K562 (cell line): ENCODE measurements at regions of chr12 and their contacts with region 1.

Region 1: DNA sequence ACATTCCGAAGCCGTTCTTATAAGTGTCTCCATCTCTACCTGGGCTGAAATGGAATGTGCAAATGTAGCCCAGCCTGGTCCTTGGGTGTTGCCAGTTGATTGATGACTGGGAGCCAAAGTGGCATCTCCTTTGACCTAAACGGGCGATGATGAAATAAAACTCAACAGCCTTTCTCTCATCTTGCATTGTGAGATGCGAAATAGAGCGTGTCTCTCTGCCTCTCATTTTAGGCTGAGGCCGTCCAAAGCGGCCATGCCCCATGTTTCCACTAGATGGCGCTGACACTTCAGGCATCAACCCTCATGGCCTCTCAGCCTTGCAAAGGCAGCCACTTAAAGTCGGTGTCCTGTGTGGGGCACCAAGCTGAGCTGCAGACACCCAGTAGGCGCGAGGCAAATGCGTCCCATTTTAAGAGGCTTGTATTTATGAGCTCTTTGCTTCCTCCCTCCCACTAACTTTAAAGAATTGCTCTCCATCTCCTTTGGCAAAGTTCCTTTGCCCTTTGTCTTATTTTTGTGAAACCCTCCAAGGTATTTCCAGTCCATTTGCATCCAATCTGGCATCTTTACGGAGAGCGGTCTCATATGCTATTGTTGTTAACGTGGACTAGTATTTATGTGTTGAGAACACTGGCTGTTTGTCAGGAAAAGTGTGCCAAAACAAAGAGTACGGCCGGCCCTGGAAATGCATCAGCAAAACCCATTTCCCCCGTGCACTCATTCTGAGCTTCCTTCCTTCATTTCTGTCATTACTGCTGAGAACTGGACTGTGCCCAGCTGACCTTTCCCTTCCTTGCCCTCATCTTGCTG is 25.0 kb downstream of the GPRC5A start:
- DNase-seq: peak; percentile 66 to 84 (median 70)
- ATAC-seq: peak; percentile 99
- H3K4me3 ChIP-seq: no peak overlapping the region
- H3K27ac ChIP-seq: no peak overlapping the region
- H3K4me1 ChIP-seq: no peaks in the 10 kb centered on the region; a peak in 1 of 5 replicates
- H3K27me3 ChIP-seq: peaks cover 3 to 17% of the 10 kb centered on the region in 2 experiments; a peak in 3 of 5 replicates
- CTCF ChIP-seq: peak; percentile 87 to 94 (median 92)
- EP300 ChIP-seq: no peak
- POLR2A ChIP-seq: no peak
- RAD21 ChIP-seq: peak; percentile 87 to 93

Region 2: GRCh38 chr12:12975322-12976077 is 59.2 kb after region 1 on chr12:
- CTCF ChIA-PET with region 1: interaction called, 7 read pairs
- POLR2A ChIA-PET with region 1: no interaction called
- in situ Hi-C with region 1: loop called (anchors 5 kb)
- intact Hi-C with region 1: loop called (anchors 2 kb)
- DNase-seq: peak; percentile 10 to 45 (median 22)
- ATAC-seq: peak; percentile 90
- H3K4me3 ChIP-seq: no peak overlapping the region
- H3K27ac ChIP-seq: no peak overlapping the region
- H3K4me1 ChIP-seq: peaks cover 0 to 2% of the 10 kb centered on the region in 2 experiments; a peak in 2 of 5 replicates
- H3K27me3 ChIP-seq: no peaks in the 10 kb centered on the region
- CTCF ChIP-seq: peak; percentile 53 to 62 (median 59); a peak in 4 of 6 replicates
- EP300 ChIP-seq: no peak
- POLR2A ChIP-seq: no peak
- RAD21 ChIP-seq: peak; percentile 21 to 61; a peak in 3 of 4 replicates